ENCODE measurements at regions of chrX and their contacts with region 1.

Region 1: GRCh38 chrX:77087529-77088169 is 359.5 kb upstream of the FGF16 start:
- DNase-seq: peak in 1 of 2 donors; percentile 89
- H3K4me3 ChIP-seq: no peak overlapping the region
- H3K27ac ChIP-seq: peak overlapping the region; percentile 72 to 86
- H3K4me1 ChIP-seq: peaks cover 0 to 12% of the 10 kb centered on the region in 2 donors
- H3K27me3 ChIP-seq: no peaks in the 10 kb centered on the region
- CTCF ChIP-seq: no peak

Region 2: DNA sequence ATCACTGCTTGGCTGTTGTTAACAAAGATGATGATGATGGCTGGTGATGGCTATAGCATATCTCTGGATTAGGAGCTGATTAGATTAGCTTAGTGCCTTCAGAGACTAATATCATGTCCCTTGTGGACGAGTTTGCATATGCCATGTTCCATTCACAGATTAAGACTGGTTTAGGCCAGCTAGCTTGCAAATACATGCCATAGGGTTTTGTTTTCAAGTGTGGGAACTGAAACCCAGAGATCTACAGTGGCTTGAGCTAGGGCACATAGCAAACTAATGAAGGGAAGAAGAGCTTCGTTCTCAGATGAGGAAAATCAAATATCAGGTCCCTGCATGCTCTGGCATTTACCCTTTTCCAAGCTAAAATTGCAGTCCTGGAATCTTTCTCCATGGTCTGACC is 167.9 kb before region 1 on chrX:
- intact Hi-C with region 1: loop called (anchors 10 kb)
- DNase-seq: no peak
- H3K4me3 ChIP-seq: no peak overlapping the region
- H3K27ac ChIP-seq: no peak overlapping the region
- H3K4me1 ChIP-seq: no peaks in the 10 kb centered on the region
- H3K27me3 ChIP-seq: no peaks in the 10 kb centered on the region
- CTCF ChIP-seq: no peak

Region 3: GRCh38 chrX:77446029-77446585 is 358.5 kb after region 1 on chrX:
- intact Hi-C with region 1: loop called (anchors 10 kb)
- DNase-seq: no peak
- H3K4me3 ChIP-seq: peak overlapping the region; percentile 44 to 60
- H3K27ac ChIP-seq: peak overlapping the region in 1 of 2 donors; percentile 18
- H3K4me1 ChIP-seq: no peaks in the 10 kb centered on the region
- H3K27me3 ChIP-seq: no peaks in the 10 kb centered on the region
- CTCF ChIP-seq: peak; percentile 10 to 32 (median 11)